Kidney (tissue), 22 donors: ENCODE measurements at regions of chr10 and their contacts with region 1.

Region 1: GRCh38 chr10:2978111-2978510 is 89.2 kb upstream of the PFKP start:
- DNase-seq: peak in 2 of 5 donors; percentile 80 to 86
- H3K4me3 ChIP-seq: no peak overlapping the region
- H3K27ac ChIP-seq: no peak overlapping the region
- H3K4me1 ChIP-seq: no peaks in the 10 kb centered on the region
- H3K27me3 ChIP-seq: no peaks in the 10 kb centered on the region
- CTCF ChIP-seq: peak; percentile 53

Region 2: DNA sequence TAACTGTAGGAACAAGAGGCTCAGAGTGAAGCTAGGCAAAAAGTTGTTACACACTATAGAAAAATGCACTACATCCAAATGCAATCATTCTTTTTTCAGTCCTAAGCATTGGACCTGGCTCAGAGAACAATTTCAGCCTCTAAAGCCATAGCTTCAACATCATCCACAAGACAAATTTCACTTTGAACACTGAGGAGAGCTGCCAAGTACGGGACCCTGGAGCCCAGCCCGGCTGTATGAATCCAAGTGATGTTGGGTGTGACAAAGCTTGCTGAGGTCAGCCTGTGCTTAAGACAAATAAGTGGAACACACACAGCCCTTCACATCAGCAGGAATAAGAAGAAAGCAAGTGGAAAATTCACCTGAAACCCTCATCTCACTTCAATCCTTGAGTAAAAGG is 143.9 kb before region 1 on chr10:
- intact Hi-C with region 1: loop called (anchors 5 kb)
- DNase-seq: no peak
- H3K4me3 ChIP-seq: no peak overlapping the region
- H3K27ac ChIP-seq: no peak overlapping the region
- H3K4me1 ChIP-seq: no peaks in the 10 kb centered on the region
- H3K27me3 ChIP-seq: no peaks in the 10 kb centered on the region
- CTCF ChIP-seq: no peak

Region 3: DNA sequence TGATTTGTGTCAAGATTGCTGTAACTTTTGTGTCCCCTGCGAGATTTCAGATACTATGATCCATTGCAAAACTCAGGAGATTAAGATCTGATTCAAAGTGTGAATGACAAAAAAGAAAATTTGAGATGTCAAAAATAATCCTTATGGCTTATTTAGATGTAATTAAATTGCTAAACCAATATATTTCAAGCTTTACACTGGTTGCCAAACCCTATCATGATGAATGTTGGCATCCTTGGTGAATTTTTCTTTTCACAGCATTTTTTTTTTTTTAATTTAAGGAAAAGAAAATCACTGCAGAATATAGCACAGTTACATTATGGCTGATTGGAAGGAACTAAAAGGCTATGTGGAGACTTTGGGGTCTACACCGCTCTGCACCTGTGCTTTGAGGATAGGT is 327.9 kb after region 1 on chr10:
- intact Hi-C with region 1: no loop called
- DNase-seq: no peak
- H3K4me3 ChIP-seq: no peak overlapping the region
- H3K27ac ChIP-seq: no peak overlapping the region
- H3K4me1 ChIP-seq: no peaks in the 10 kb centered on the region
- H3K27me3 ChIP-seq: no peaks in the 10 kb centered on the region
- CTCF ChIP-seq: no peak